OCI-LY7 (cell line): ENCODE measurements at regions of chr4 and their contacts with region 1.

Region 1: GRCh38 chr4:127965062-127965802 is at the starts of genes ABHD18 and MFSD8:
- DNase-seq: peak; percentile 99
- H3K4me3 ChIP-seq: peak within 1 kb of the TSS; percentile 76
- H3K27ac ChIP-seq: peak within 1 kb of the TSS; percentile 53
- H3K4me1 ChIP-seq: peaks cover 8% of the 10 kb centered on the region
- CTCF ChIP-seq: peak; percentile 43; the same call in 1 of the 2 replicates
- total RNA-seq, gene ABHD18: 8.6 and 10.4 TPM in 2 replicates
- total RNA-seq, gene MFSD8: 15.1 and 15.9 TPM in 2 replicates

Region 2: DNA sequence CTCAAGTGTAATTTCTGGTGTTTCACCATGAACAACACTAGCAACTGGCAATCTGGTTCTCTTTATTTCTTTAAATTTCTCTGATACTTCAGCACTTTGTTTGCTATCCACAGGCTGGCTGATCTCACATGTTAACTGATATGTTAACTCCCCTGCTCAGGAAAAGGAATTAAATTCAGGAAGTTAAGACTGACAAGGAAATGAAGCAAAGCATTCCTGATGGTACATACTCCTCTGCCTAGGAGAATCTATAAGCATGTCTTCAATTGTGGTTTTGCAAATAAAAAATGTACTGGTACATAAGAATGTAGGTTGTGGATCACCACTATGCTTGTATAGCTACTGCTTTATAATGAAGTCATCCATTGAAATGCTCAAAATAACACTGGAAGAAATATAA is 1451.6 kb before region 1 on chr4:
- CTCF ChIA-PET with region 1: no interaction called
- POLR2A ChIA-PET with region 1: no interaction called
- intact Hi-C with region 1: no loop called
- DNase-seq: no peak
- H3K4me3 ChIP-seq: no peak overlapping the region
- H3K27ac ChIP-seq: no peak overlapping the region
- H3K4me1 ChIP-seq: no peaks in the 10 kb centered on the region
- CTCF ChIP-seq: no peak

Region 3: DNA sequence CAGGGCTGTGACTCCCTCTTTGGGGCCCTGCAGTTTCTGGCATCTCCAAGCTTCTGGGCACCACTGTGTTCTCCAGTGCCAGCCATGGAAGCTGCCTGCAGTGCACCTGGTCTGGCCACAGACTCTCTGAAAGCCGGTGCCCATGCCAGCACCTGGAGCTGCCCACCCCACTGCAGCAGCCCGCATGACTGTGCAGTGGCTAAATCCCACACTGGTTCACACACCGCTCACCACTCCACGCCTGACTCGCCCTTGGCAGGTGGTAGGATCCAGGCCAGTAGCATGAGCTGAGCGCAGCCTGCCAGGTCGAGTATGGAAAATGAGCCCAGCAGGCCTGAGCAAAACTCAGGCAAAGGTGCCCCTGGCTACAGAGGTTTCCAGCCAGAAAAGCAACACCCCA is 405.3 kb before region 1 on chr4:
- CTCF ChIA-PET with region 1: no interaction called
- POLR2A ChIA-PET with region 1: no interaction called
- intact Hi-C with region 1: no loop called
- DNase-seq: no peak
- H3K4me3 ChIP-seq: no peak overlapping the region
- H3K27ac ChIP-seq: no peak overlapping the region
- H3K4me1 ChIP-seq: no peaks in the 10 kb centered on the region
- CTCF ChIP-seq: no peak

Region 4: DNA sequence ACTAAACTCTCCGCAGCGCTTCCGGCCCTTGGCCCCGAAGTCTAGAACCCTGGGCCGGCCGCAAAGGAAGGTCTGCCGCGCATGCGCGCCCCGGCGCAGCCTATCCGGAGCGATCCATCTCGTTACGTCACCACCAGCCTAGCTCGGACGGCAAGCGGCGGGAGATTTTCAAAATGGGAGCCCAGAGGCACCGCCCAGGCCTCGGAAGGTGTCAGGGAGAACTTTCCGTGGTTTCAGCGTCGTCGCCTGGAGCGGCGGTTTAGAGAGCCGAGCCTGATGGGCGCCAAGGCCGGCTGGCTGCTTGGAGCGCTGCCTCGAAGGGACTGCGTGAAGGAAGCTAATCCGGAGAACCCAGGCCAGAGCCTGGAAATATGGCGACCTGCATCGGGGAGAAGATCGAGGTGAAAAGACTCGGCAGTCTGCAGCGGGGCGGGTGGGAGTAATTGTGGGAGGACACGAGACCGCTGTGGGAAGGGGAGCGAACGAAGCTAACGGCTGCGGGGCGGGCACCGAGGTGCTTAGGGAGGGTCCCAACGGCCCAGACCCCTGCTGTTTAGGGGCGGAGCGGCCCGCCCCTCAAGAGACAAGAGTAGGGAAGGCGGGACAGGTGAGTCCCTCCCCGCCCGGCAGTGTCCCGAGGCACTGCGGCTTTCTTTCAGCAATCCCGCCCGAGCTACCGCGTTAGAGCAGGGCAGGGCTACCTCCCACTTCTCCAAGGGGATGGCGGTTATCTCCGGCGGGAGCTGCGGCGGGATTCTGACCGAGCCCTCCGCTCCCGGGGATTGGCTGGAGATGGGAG is 84.3 kb before region 1 on chr4 and contains the start of gene PLK4:
- CTCF ChIA-PET with region 1: no interaction called
- POLR2A ChIA-PET with region 1: interaction called, 12 read pairs
- intact Hi-C with region 1: loop called (anchors 1 kb)
- DNase-seq: peak; percentile 97
- H3K4me3 ChIP-seq: peak within 1 kb of the TSS; percentile 72
- H3K27ac ChIP-seq: peak within 1 kb of the TSS; percentile 67
- H3K4me1 ChIP-seq: peaks cover 29% of the 10 kb centered on the region
- CTCF ChIP-seq: no peak
- total RNA-seq, gene PLK4: 74.1 and 79.3 TPM in 2 replicates

Region 5: DNA sequence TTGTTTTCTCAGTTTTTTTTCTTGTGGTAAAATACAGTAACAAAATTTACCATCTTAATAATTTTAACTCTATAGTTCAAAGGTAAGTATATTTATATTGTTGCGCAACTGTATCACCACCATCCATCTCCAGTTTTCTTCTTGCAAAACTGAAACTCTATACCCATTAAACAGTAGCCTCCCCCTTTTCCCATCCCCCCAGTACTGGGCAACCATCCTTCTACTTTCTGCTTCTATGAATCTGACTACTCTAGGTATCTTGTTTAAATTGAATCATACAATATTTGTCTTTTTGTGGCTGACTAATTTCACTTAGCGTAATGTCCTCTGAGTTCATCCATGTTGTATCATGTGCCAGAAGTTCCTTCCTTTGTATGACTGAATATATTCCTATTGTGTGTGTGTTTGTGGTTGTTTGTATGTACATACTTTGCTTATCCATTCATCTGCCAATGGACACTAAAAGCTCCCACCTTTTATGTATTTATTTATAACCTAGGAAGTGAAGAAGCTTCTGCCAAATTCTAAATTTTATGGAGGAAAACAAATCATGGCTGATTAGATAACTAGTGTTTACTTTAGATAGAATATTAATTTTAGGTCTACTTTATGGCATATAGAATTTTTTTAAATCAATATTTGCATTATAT is 10.0 kb after region 1 on chr4:
- CTCF ChIA-PET with region 1: no interaction called
- POLR2A ChIA-PET with region 1: interaction called, 16 read pairs
- intact Hi-C with region 1: no loop called
- DNase-seq: no peak
- H3K4me3 ChIP-seq: no peak overlapping the region
- H3K27ac ChIP-seq: no peak overlapping the region
- H3K4me1 ChIP-seq: no peaks in the 10 kb centered on the region
- CTCF ChIP-seq: no peak

Region 6: DNA sequence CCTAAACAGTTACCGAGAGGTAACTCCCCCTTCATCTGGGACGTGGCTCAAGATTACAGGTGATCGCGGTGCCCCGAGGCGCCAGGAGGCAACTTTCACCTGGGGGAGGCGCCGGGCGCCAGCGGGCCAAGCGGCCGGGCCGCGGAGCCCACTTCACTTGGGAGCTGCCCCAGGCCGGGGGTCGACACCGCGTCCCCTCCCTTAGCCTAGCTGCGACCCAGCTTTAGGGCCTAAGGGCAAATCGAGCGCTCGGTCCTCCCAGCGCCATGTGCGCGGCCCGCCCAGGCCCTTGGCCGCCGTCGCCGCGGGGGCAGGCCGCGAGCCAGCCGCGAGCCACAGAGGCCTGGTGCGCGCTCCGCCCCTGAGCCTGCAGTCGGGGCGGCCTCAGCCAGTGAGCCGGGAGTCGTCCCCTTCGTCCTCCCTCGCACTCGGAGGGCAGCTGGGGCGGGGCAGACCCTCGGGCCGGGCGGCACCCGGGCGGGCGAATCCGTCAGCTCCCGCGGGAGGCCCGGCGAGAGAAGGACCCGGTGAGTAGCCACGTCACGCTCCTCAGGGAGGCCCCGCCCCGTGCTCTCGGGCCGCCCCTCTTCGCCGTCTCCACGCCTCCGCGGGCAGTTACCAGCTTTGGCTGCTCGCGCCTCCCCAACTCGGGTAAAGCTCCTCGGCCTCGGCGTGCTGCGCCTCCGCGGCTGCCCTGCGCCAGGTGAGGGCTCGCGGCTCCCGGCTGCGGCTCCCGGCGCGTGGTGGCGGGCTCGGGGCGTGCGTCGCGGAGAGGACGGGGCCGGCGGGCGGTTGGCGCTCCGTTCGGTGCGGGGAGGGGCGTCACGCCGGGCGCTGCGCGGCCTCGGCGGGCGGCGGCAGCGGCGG is 95.7 kb after region 1 on chr4 and contains the start of gene LARP1B:
- CTCF ChIA-PET with region 1: no interaction called
- POLR2A ChIA-PET with region 1: interaction called, 12 read pairs
- intact Hi-C with region 1: loop called (anchors 1 kb)
- DNase-seq: peak; percentile 94
- H3K4me3 ChIP-seq: peak within 1 kb of the TSS; percentile 82
- H3K27ac ChIP-seq: peak within 1 kb of the TSS; percentile 81
- H3K4me1 ChIP-seq: peaks cover 15% of the 10 kb centered on the region
- CTCF ChIP-seq: 0 out of 2 replicates have a peak, but pooled peaks have one; percentile 13
- total RNA-seq, gene LARP1B: 16.5 and 22.1 TPM in 2 replicates

Region 7: DNA sequence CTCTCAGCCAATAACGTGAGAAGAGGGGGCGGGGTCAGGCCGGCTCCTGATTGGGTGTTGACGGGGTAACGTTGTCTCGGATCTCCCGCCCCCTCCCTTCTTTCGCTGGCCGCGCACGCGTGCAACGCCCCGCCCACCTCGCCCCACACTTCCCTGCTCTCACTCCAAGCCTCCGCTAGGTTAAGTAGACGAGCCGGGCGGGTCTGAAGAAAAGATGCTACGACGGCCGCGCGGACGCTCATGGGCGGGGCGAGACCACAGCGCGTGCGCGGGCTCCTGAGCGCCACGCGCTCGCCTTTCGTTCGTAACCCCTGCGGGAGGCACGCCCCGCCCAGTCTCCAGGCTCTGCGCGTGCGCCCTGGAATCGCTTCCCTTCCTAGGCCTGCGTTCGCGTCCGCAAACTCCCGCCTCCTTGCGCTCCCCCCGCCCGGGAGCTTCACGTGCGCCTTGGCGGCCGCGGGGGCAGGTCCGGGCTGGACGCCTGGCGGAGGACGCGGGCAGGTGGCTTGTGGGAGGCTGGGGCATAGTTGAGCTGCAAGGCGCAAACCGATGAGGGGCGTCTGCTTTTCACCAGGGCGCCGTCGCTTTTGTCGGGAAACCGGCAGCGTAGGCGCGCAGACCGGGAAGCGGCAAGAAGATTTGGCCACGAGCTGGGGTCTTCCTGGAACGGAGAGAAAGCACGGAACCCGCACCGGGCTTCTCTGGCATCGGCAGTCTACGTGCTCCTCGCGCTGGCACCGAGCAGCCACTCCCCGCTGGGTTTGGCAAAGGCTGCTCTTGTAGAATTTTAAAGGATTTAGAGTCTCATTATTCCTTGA is 322.8 kb after region 1 on chr4:
- CTCF ChIA-PET with region 1: no interaction called
- POLR2A ChIA-PET with region 1: interaction called, 4 read pairs
- intact Hi-C with region 1: loop called (anchors 2 kb)
- DNase-seq: peak; percentile 99
- H3K4me3 ChIP-seq: peak overlapping the region; percentile 98
- H3K27ac ChIP-seq: peak overlapping the region; percentile 72
- H3K4me1 ChIP-seq: peaks cover 25% of the 10 kb centered on the region
- CTCF ChIP-seq: no peak

Region 8: DNA sequence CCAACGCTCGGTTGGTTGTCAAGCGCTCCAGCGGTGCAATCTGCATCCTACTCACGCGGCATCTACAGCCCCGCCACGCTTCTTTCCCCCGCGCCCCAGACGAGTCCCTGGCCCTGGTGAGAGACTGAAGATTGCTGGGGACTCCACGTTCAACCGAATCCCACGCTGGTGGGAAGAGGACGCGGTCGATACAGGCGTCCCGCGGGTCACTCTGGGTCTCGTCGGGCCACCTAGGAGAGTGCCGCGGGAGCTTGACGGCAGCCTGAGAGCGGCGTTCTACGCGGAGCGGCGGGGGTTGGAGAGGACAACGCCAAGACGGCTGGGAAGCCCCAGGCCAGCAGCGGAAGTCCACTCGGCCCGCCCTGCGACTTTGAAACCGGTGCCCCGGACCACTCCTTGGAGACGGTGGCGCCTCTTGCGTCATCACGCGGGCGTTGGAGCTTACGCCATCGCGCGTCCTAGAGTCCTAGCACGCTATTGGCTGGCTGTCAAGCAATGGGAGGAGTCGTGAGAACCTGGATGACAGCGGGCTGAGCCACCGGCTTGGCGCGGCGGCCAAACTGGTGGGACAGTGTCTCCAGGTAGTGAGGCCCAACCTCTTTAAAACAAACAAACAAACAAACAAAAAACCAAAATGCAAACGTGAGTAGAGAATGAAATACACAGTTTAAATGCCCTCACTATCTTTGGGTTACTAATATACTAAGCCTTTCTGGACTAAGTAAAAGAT is 1128.1 kb after region 1 on chr4 and contains the start of gene SCLT1:
- CTCF ChIA-PET with region 1: no interaction called
- POLR2A ChIA-PET with region 1: interaction called, 3 read pairs
- intact Hi-C with region 1: loop called (anchors 10 kb)
- DNase-seq: peak; percentile 98
- H3K4me3 ChIP-seq: peak within 1 kb of the TSS; percentile 88
- H3K27ac ChIP-seq: peak within 1 kb of the TSS; percentile 77
- H3K4me1 ChIP-seq: peaks cover 41% of the 10 kb centered on the region
- CTCF ChIP-seq: no peak
- total RNA-seq, gene SCLT1: 36.9 and 42.5 TPM in 2 replicates